Esophagus squamous epithelium (tissue), 5 donors: ENCODE measurements at regions of chr12 and their contacts with region 1.

Region 1: GRCh38 chr12:130761537-130762318 is 45.6 kb upstream of the RIMBP2 start:
- DNase-seq: no peak
- H3K4me3 ChIP-seq: no peak overlapping the region
- H3K27ac ChIP-seq: no peak overlapping the region
- H3K4me1 ChIP-seq: peaks cover 0 to 4% (median 0%) of the 10 kb centered on the region in 3 donors
- H3K27me3 ChIP-seq: peaks cover 0 to 36% (median 0%) of the 10 kb centered on the region in 4 donors
- CTCF ChIP-seq: peak in 5 of 6 experiments; percentile 51 to 81 (median 61)
- POLR2A ChIP-seq: no peak

Region 2: DNA sequence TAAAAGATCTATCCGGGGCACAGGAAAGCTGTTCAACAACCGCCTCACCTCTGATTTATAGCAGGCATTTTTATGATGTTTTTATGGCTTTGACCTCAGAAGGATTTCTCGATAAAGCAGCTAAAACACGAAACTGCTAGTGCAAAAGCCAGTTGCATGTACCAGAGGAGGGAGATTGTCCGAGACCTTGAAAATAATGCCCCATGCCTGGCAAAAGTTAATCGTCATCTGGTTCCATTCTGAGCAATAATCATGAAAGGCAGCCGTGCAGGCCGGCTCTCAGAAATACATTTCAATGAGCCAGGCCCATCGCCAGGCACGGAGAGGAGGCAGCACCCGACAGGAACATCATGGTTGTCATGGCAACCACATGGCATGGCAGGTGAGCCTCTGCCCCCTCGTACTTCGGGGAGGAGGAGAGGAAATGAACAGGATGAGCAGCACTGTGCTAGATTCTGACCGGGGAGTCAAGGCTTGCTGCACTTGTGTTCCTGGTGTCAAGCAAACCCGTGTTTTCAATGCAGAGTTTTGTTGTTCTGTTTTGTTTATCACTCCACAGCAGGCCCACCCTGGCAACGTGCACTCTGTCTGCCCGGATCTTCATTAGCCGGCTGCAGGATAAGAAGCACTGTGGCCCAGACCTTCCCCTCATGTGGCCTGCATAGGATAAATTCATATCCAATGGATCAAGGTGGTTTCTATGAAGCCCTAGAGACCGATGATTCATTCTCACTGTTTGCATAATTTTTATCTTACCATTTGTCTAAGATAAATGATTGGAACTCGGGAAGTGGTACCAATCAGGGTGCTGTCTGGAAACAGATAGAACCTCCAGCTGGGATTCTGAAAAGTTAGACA is 205.9 kb before region 1 on chr12:
- intact Hi-C with region 1: no loop called
- DNase-seq: no peak
- H3K4me3 ChIP-seq: no peak overlapping the region
- H3K27ac ChIP-seq: no peak overlapping the region
- H3K4me1 ChIP-seq: no peaks in the 10 kb centered on the region
- H3K27me3 ChIP-seq: peaks cover 0 to 4% (median 0%) of the 10 kb centered on the region in 4 donors
- CTCF ChIP-seq: no peak
- POLR2A ChIP-seq: no peak

Region 3: GRCh38 chr12:130818635-130819576 is 57.2 kb after region 1 on chr12:
- intact Hi-C with region 1: loop called (anchors 5 kb)
- DNase-seq: no peak
- H3K4me3 ChIP-seq: peak overlapping the region; percentile 29 to 67 (median 48)
- H3K27ac ChIP-seq: peak overlapping the region in 3 of 4 donors; percentile 47 to 64 (median 61)
- H3K4me1 ChIP-seq: peaks cover 3 to 20% (median 11%) of the 10 kb centered on the region in 3 donors
- H3K27me3 ChIP-seq: no peaks in the 10 kb centered on the region
- CTCF ChIP-seq: peak; percentile 85 to 95 (median 87)
- POLR2A ChIP-seq: no peak

Region 4: DNA sequence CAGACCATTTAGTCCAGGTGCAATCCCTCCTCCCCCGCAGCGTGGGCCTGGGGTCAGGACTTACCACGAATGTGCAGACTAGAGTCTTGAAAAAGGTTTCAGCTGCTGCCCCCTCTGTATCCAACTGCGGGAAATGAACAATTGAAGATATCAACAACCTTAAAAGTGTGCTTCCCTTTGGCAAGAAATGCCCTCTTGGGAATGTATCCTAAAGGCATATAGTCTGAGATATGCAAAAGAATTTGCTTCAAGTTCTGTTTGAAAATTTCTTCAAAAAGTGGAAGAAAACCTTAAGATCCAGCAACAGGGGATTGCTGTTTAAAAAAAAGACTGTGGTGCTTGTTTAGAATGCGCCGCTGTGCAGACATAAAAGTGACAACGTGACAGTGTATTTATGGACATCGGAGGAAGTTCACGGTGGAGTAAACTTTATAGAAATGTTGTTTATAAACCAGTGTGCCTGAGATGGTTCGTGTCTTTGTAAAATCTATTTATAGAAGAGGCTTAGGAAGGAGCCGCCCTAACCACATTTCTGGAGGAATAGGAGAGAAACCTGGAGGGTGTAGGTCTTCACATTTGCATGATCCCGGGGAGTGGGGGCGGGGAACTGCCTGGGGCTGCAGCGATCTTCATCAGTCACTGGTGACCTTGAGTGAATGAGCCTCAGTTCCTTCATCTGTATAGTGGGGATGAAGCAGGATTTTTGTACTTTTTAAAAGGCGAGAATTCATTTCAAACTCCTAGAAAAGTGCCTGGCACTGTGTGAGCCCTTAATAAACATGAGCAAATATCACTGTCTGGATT is 219.4 kb after region 1 on chr12:
- intact Hi-C with region 1: no loop called
- DNase-seq: no peak
- H3K4me3 ChIP-seq: no peak overlapping the region
- H3K27ac ChIP-seq: no peak overlapping the region
- H3K4me1 ChIP-seq: peaks cover 0 to 11% (median 0%) of the 10 kb centered on the region in 3 donors
- H3K27me3 ChIP-seq: peaks cover 0 to 12% (median 0%) of the 10 kb centered on the region in 4 donors
- CTCF ChIP-seq: no peak
- POLR2A ChIP-seq: no peak